Activated naive CD4-positive, alpha-beta T cell treated with anti-CD3 and anti-CD28 coated beads for 36 hours (primary cell): ENCODE measurements at regions of chr4 and their contacts with region 1.

Region 1: DNA sequence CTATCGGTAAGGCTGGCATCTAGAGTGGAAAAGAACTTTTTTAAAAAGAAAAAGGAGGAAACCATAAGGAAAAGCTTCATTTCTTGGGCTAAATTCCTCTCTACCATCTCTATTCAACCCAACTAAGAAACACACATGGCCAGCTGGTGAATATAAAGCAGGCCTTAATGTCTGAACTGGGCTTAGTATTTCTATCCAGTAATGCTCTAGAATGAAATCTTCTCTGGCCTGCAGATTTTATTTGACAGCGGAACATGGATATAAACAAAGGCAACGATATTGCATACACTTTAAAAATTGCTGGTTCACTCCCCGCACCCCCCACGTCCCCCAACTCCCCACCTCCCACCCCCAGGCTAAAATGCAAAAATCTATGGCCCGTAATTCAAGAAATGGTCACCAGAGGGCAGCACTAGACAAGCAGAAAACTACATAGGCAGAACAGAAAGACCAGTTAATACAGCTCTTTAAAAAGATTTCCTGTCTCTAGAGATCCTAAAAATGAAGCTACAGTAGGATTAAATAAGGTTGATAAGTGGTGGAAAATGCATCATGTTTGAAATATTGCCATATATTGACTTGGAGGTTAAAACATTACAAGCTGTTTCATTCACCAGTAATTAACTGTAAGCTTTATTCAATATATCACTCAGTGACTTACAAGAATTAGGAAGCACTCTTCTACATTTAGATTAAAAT is 155.2 kb upstream of the GALNT7 start:
- DNase-seq: peak; percentile 67
- H3K4me3 Mint-ChIP-seq: no peak overlapping the region
- H3K27ac Mint-ChIP-seq: no peak overlapping the region
- H3K4me1 Mint-ChIP-seq: no peaks in the 10 kb centered on the region
- H3K27me3 Mint-ChIP-seq: no peaks in the 10 kb centered on the region

Region 2: DNA sequence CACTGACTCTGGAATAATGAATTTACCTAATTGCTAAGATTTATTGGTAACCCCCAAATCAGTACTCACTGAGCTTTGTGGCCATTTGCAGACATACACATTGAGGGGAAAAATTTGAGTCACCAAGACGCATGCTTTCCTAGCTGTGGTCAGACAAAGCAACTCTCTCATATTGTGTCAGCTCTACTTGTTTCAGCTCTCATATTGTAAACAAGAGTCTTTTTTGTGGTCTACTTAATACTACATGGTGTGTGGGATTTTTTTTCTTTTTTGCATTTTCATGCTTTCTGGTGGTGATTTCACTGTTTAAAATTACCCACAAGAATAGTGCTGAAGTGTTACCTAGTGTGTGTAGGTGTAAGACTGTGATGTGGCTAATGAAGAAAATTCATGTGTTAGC is 272.9 kb before region 1 on chr4:
- CTCF ChIA-PET with region 1: no interaction called
- intact Hi-C with region 1: no loop called
- DNase-seq: no peak
- H3K4me3 Mint-ChIP-seq: no peak overlapping the region
- H3K27ac Mint-ChIP-seq: no peak overlapping the region
- H3K4me1 Mint-ChIP-seq: no peaks in the 10 kb centered on the region
- H3K27me3 Mint-ChIP-seq: no peaks in the 10 kb centered on the region

Region 3: GRCh38 chr4:173168396-173169177 is 155.2 kb after region 1 on chr4 and contains the start of gene GALNT7:
- CTCF ChIA-PET with region 1: interaction called, 4 read pairs
- intact Hi-C with region 1: loop called (anchors 5 kb)
- DNase-seq: peak; percentile 70
- H3K4me3 Mint-ChIP-seq: peak within 1 kb of the TSS; percentile 94
- H3K27ac Mint-ChIP-seq: peak within 1 kb of the TSS; percentile 83
- H3K4me1 Mint-ChIP-seq: peaks cover 38% of the 10 kb centered on the region
- H3K27me3 Mint-ChIP-seq: no peaks in the 10 kb centered on the region
- total RNA-seq, gene GALNT7: 8.5 to 11.1 TPM

Region 4: DNA sequence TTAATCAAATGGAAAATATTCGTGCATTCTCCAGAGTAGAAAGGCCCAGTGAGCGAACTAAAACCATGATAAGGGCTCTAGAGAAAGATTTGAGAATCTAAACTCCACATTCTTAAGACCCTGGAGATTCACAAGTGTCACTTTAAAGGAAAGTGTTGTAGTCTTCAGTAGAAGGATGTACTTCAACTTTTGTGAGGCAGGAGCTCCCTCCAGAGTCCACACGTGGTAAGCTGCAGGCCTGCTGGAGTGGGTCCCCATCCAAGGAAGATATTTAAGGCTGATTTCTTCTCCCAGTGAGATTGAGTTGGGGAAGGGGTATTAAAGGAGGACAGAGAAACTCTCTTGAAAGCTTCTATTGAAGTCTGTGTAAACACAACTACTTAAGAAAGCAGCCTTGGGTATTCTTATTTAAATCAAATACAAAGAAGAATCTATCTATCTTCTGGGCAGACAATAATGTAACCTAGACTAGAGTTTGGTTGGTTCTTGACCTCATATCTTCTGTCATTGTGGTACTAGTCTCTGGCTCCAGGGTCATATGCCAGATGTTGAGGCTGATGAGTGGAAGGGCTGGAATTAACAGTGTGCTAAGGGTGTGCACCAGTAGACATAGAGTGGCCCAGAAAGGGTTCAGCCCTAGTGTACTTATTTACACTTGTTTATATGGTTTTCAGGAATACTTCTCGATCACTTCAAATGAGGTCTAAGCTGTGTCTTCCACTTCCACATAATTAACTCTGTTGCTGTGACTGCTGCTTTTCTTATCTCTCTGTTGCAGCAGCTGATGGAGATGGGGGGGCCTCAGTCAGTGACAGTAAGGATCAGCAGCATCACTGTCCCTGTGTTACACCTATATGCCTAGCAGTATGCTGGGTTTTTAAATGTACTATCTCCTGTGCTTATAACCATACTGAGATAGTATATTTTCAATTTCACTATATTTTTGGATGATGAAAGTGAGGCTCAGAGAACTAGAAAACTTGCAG is 244.6 kb after region 1 on chr4:
- CTCF ChIA-PET with region 1: interaction called, 64 read pairs
- intact Hi-C with region 1: loop called (anchors 1 kb)
- DNase-seq: peak; percentile 77
- H3K4me3 Mint-ChIP-seq: no peak overlapping the region
- H3K27ac Mint-ChIP-seq: no peak overlapping the region
- H3K4me1 Mint-ChIP-seq: peaks cover 8% of the 10 kb centered on the region
- H3K27me3 Mint-ChIP-seq: no peaks in the 10 kb centered on the region

Region 5: DNA sequence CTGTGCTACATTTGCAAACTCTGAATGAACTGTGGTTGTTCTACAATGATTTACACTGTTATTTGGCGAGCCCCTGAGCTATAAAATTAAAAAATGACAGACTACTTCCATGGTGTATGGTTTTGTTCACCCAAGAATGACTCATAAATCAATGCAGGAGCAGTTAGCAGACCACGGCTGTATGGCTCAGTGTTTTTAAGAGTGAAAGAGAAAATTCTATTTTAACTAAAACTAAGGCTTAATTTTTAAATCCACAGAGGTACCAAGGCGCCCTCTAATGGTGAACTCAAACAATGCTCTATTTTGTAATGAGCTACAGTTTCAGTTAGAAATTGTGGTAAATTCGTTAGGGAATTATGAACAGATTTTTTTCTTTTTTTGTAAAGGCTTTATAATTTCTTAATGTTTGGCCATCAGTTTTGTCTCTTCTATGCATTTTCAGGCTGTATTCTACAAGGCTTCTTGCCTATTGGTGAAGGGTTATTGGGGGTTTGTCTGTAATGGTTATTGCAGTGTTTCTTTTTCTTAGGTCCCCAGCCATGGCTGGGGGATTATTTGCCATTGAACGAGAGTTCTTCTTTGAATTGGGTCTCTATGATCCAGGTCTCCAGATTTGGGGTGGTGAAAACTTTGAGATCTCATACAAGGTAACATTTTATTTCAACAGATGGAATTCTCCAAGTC is 288.3 kb after region 1 on chr4:
- CTCF ChIA-PET with region 1: interaction called, 80 read pairs
- intact Hi-C with region 1: loop called (anchors 1 kb)
- DNase-seq: peak; percentile 39
- H3K4me3 Mint-ChIP-seq: no peak overlapping the region
- H3K27ac Mint-ChIP-seq: no peak overlapping the region
- H3K4me1 Mint-ChIP-seq: peaks cover 2% of the 10 kb centered on the region
- H3K27me3 Mint-ChIP-seq: no peaks in the 10 kb centered on the region

Region 6: GRCh38 chr4:173420324-173420752 is 407.0 kb after region 1 on chr4:
- CTCF ChIA-PET with region 1: interaction called, 14 read pairs
- intact Hi-C with region 1: loop called (anchors 1 kb)
- DNase-seq: no peak
- H3K4me3 Mint-ChIP-seq: no peak overlapping the region
- H3K27ac Mint-ChIP-seq: no peak overlapping the region
- H3K4me1 Mint-ChIP-seq: peaks cover 4% of the 10 kb centered on the region
- H3K27me3 Mint-ChIP-seq: peaks cover 3% of the 10 kb centered on the region

Region 7: GRCh38 chr4:174156239-174156826 is 1143.0 kb after region 1 on chr4:
- CTCF ChIA-PET with region 1: no interaction called
- intact Hi-C with region 1: loop called (anchors 5 kb)
- DNase-seq: no peak
- H3K4me3 Mint-ChIP-seq: no peak overlapping the region
- H3K27ac Mint-ChIP-seq: no peak overlapping the region
- H3K4me1 Mint-ChIP-seq: no peaks in the 10 kb centered on the region
- H3K27me3 Mint-ChIP-seq: peaks cover 17% of the 10 kb centered on the region